CD4-positive, alpha-beta T cell (primary cell): ENCODE measurements at regions of chr19 and their contacts with region 1.

Region 1: GRCh38 chr19:21358768-21359451 is at the start of gene ZNF738:
- DNase-seq: peak; percentile 69 to 92 (median 74)
- ATAC-seq: peak; percentile 96
- H3K4me3 ChIP-seq: peak within 1 kb of the TSS; percentile 78
- H3K4me3 Mint-ChIP-seq: peak within 1 kb of the TSS; percentile 100
- H3K27ac ChIP-seq: peak within 1 kb of the TSS; percentile 46 to 63
- H3K27ac Mint-ChIP-seq: peak within 1 kb of the TSS; percentile 94
- H3K4me1 ChIP-seq: no peaks in the 10 kb centered on the region
- H3K4me1 Mint-ChIP-seq: peaks cover 18% of the 10 kb centered on the region
- H3K27me3 ChIP-seq: no peaks in the 10 kb centered on the region
- H3K27me3 Mint-ChIP-seq: no peaks in the 10 kb centered on the region
- CTCF ChIP-seq: no peak
- total RNA-seq, gene ZNF738: 4.7 to 5.0 TPM

Region 2: GRCh38 chr19:21314676-21315075 is 44.2 kb before region 1 on chr19:
- CTCF ChIA-PET with region 1: interaction called, 3 read pairs
- POLR2A ChIA-PET with region 1: interaction called, 3 read pairs
- intact Hi-C with region 1: loop called in 1 of 2 experiments (anchors 10 kb)
- DNase-seq: peak in 1 of 14 experiments; percentile 34
- ATAC-seq: no peak
- H3K4me3 ChIP-seq: no peak overlapping the region
- H3K4me3 Mint-ChIP-seq: no peak overlapping the region
- H3K27ac ChIP-seq: no peak overlapping the region
- H3K27ac Mint-ChIP-seq: peak overlapping the region; percentile 46
- H3K4me1 ChIP-seq: no peaks in the 10 kb centered on the region
- H3K4me1 Mint-ChIP-seq: peaks cover 58% of the 10 kb centered on the region
- H3K27me3 ChIP-seq: no peaks in the 10 kb centered on the region
- H3K27me3 Mint-ChIP-seq: no peaks in the 10 kb centered on the region
- CTCF ChIP-seq: no peak

Region 3: GRCh38 chr19:21402303-21402985 is 43.5 kb after region 1 on chr19:
- CTCF ChIA-PET with region 1: interaction called, 5 read pairs
- POLR2A ChIA-PET with region 1: interaction called, 22 read pairs
- intact Hi-C with region 1: loop called (anchors 2 to 5 kb)
- DNase-seq: no peak
- ATAC-seq: no peak
- H3K4me3 ChIP-seq: no peak overlapping the region
- H3K4me3 Mint-ChIP-seq: peak overlapping the region; percentile 25
- H3K27ac ChIP-seq: no peak overlapping the region
- H3K27ac Mint-ChIP-seq: no peak overlapping the region
- H3K4me1 ChIP-seq: peaks cover 7% of the 10 kb centered on the region
- H3K4me1 Mint-ChIP-seq: peaks cover 53% of the 10 kb centered on the region
- H3K27me3 ChIP-seq: no peaks in the 10 kb centered on the region
- H3K27me3 Mint-ChIP-seq: no peaks in the 10 kb centered on the region
- CTCF ChIP-seq: no peak

Region 4: GRCh38 chr19:21454901-21455300 is 96.0 kb after region 1 on chr19:
- CTCF ChIA-PET with region 1: no interaction called
- POLR2A ChIA-PET with region 1: no interaction called
- intact Hi-C with region 1: no loop called
- DNase-seq: no peak
- ATAC-seq: no peak
- H3K4me3 ChIP-seq: no peak overlapping the region
- H3K4me3 Mint-ChIP-seq: no peak overlapping the region
- H3K27ac ChIP-seq: no peak overlapping the region
- H3K27ac Mint-ChIP-seq: no peak overlapping the region
- H3K4me1 ChIP-seq: no peaks in the 10 kb centered on the region
- H3K4me1 Mint-ChIP-seq: no peaks in the 10 kb centered on the region
- H3K27me3 ChIP-seq: no peaks in the 10 kb centered on the region
- H3K27me3 Mint-ChIP-seq: no peaks in the 10 kb centered on the region
- CTCF ChIP-seq: no peak

Region 5: GRCh38 chr19:21767065-21767800 is 408.3 kb after region 1 on chr19 and contains the start of gene ZNF100:
- CTCF ChIA-PET with region 1: no interaction called
- POLR2A ChIA-PET with region 1: no interaction called
- intact Hi-C with region 1: loop called in 1 of 2 experiments (anchors 5 kb)
- DNase-seq: peak; percentile 73 to 92 (median 82)
- ATAC-seq: peak; percentile 98
- H3K4me3 ChIP-seq: peak within 1 kb of the TSS; percentile 94
- H3K4me3 Mint-ChIP-seq: peak within 1 kb of the TSS; percentile 95
- H3K27ac ChIP-seq: peak within 1 kb of the TSS; percentile 44 to 52
- H3K27ac Mint-ChIP-seq: peak within 1 kb of the TSS; percentile 87
- H3K4me1 ChIP-seq: peaks cover 13% of the 10 kb centered on the region
- H3K4me1 Mint-ChIP-seq: peaks cover 45% of the 10 kb centered on the region
- H3K27me3 ChIP-seq: no peaks in the 10 kb centered on the region
- H3K27me3 Mint-ChIP-seq: no peaks in the 10 kb centered on the region
- CTCF ChIP-seq: no peak
- total RNA-seq, gene ZNF100: 10.8 to 11.0 TPM